CD8-positive, alpha-beta T cell (primary cell): ENCODE measurements at regions of chr3 and their contacts with region 1.

Region 1: GRCh38 chr3:152428577-152428976 is 159.8 kb downstream of the MBNL1 start:
- DNase-seq: peak in 1 of 9 experiments; percentile 20
- ATAC-seq: no peak
- H3K4me3 ChIP-seq: no peak overlapping the region
- H3K4me3 Mint-ChIP-seq: no peak overlapping the region
- H3K27ac ChIP-seq: peak overlapping the region in 1 of 2 experiments; percentile 29
- H3K27ac Mint-ChIP-seq: peak overlapping the region; percentile 38
- H3K4me1 ChIP-seq: peaks cover 20% of the 10 kb centered on the region
- H3K4me1 Mint-ChIP-seq: peaks cover 59% of the 10 kb centered on the region
- H3K27me3 ChIP-seq: no peaks in the 10 kb centered on the region
- H3K27me3 Mint-ChIP-seq: no peaks in the 10 kb centered on the region
- CTCF ChIP-seq: no peak

Region 2: GRCh38 chr3:152416808-152417580 is 11.6 kb before region 1 on chr3:
- CTCF ChIA-PET with region 1: no interaction called
- POLR2A ChIA-PET with region 1: no interaction called
- intact Hi-C with region 1: loop called in 1 of 2 experiments (anchors 1 kb)
- DNase-seq: no peak
- ATAC-seq: no peak
- H3K4me3 ChIP-seq: no peak overlapping the region
- H3K4me3 Mint-ChIP-seq: no peak overlapping the region
- H3K27ac ChIP-seq: peak overlapping the region in 1 of 2 experiments; percentile 23
- H3K27ac Mint-ChIP-seq: peak overlapping the region; percentile 61
- H3K4me1 ChIP-seq: peaks cover 26% of the 10 kb centered on the region
- H3K4me1 Mint-ChIP-seq: peaks cover 73% of the 10 kb centered on the region
- H3K27me3 ChIP-seq: no peaks in the 10 kb centered on the region
- H3K27me3 Mint-ChIP-seq: no peaks in the 10 kb centered on the region
- CTCF ChIP-seq: no peak